ENCODE measurements at regions of chr2 and their contacts with region 1.

Region 1: DNA sequence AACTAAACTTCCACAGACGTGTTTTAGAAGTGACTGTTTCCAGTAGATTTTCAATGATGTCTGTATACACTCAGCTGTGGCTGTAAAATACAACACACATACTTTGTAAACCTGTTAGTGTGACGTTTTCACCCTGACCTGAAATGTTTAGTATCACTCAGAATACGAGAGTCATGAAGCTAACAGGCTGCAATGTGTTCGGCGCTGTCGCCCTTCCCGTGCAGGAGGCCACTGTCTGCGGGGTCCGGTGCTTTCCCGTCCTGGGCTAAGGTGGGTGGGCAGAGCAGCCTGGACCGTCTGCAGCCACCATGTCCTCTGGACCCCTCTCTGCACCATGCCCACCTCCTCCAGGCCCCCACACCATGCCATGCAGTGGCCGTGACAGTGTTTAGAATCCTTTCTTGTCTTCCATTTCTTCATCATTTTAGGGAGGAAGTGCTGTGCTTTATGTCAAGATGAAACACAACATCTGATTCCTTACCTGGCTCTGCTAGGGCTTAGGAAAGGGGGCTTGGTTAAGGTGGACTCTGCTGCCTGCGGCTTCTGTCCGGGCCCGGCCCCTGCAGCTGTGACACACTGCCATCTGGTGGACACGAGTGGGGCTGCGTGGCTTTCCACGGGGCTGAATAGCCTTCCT is 53.8 kb upstream of the RBM44 start:
- DNase-seq: peak; percentile 48 to 94 (median 78)
- ATAC-seq: peak; percentile 85 to 94 (median 94)
- H3K4me3 ChIP-seq: no peak overlapping the region
- H3K27ac ChIP-seq: peak overlapping the region in 1 of 4 donors; percentile 3
- H3K4me1 ChIP-seq: peaks cover 0 to 5% (median 0%) of the 10 kb centered on the region in 3 donors
- H3K27me3 ChIP-seq: no peaks in the 10 kb centered on the region
- CTCF ChIP-seq: peak; percentile 94 to 95 (median 95)

Region 2: DNA sequence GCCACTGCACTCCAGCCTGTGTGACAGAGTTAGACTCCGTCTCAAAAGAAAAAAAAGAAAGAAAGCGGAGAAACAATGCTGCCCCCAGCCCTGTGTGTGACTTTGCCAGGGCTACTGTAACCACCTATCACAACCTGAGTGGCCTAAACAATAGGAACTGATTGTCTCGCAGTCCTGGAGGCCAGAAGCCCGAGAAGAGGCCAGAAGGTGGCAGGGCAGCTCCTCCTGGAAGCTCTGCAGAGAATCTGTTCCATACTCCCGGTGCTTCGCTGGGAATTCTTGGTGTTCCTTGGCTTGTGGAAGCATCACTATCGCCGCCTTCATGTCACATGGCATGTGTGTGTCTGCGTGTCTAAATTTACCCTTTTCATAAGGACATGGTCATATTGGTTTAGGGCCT is 139.8 kb before region 1 on chr2:
- intact Hi-C with region 1: loop called in 1 of 3 experiments (anchors 5 kb)
- DNase-seq: peak in 1 of 6 donors; percentile 35
- ATAC-seq: peak in 3 of 4 donors; percentile 36 to 82 (median 67)
- H3K4me3 ChIP-seq: no peak overlapping the region
- H3K27ac ChIP-seq: no peak overlapping the region
- H3K4me1 ChIP-seq: no peaks in the 10 kb centered on the region
- H3K27me3 ChIP-seq: no peaks in the 10 kb centered on the region
- CTCF ChIP-seq: peak in 1 of 4 donors; percentile 19

Region 3: GRCh38 chr2:237674731-237675276 is 69.9 kb before region 1 on chr2:
- intact Hi-C with region 1: loop called in 1 of 3 experiments (anchors 5 kb)
- DNase-seq: peak in 5 of 6 donors; percentile 55 to 80 (median 67)
- ATAC-seq: peak; percentile 81 to 91 (median 85)
- H3K4me3 ChIP-seq: peak overlapping the region in 1 of 4 donors; percentile 6
- H3K27ac ChIP-seq: peak overlapping the region; percentile 29 to 84 (median 62)
- H3K4me1 ChIP-seq: peaks cover 3 to 26% (median 4%) of the 10 kb centered on the region in 3 donors
- H3K27me3 ChIP-seq: no peaks in the 10 kb centered on the region
- CTCF ChIP-seq: no peak